ENCODE measurements at regions of chr16 and their contacts with region 1.

Region 1: DNA sequence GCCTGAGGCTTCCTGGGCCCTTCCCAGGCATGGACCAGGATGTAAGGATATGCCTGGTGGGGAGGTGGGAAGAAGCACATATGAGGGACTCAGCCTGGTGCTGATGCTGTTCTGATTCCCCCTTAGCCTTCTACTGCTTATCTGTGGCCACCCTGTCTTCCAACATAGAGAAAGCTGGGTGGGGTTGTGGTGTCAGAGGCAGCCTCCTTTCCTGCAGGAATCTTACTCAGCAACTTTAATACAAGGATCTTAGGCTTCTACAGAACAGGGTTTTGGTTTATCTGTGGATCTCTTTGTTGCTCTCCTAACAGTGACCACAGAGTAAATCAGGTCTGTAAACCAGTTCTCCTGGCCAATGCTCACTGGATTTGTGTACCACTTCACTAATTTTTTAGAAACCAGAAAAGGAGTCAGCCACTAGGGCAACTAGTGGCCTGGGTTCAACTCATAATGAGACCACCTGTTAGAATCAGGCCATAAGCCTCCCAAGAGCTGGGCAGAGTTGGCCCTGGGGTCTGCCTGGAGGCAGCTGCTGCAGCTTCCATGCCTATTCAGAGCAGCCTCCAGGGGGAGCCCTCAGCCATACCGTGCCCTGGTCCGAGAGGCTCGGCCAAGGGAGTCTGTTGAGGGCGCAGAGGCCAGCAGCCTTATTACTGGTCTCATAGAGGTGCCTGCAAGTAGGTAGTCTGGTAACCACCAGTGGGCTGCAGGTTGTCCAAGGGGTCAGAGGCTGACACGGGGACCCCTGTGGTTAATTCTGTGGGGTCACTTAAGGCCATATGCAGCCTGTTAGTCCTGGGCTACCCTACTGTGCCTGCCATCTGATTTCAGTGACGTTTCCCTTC is 7.1 kb downstream of the HAS3 start:
- DNase-seq: peak in 2 of 3 donors; percentile 73 to 75
- ATAC-seq: peak; percentile 84
- H3K4me3 ChIP-seq: no peak overlapping the region
- H3K4me1 ChIP-seq: peaks cover 4% of the 10 kb centered on the region
- CTCF ChIP-seq: peak; percentile 66

Region 2: DNA sequence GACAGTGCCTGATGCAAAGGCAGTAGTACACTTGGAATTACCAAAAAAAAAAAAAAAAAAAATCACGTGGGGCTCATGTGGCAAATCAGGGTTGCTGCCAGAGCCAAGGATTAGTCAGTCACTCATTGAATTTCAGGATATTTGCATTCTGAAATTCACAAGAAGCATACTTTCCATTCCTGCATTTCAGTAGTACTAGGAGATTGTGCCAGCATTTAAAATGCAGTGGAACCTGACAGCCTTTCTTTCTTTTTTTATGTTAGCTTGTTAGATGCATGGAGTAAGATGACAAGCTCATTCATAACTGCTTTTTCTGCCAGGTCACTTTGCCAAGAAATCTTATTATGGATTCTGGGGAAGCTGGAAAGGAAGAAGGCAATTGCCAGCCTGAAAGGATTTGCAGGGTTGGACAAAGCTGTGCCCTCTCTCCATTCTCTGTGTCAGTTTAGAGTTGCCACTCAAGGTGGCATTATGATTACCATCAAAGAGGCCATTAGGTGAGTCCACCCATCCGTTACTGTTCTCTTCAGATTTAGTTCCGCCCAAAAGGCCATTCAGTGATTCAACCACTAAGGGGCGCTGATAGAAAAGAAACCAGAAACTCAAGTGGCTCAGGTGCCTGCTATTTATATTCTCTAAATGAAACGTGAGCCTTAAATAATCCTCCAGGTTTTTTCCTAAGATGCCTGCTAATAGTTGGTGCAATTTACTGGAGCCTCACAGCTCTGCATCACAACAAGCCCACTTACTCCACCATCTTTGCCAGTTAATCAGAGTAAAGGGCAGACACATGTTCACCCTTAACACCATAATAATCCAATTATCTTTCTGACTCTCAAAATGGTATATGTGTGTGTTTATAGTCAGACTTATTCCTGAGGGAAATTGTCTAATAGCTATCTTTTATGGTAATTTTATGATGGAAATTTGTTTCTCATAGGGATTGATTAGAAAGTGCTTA is 210.2 kb before region 1 on chr16:
- intact Hi-C with region 1: loop called in 1 of 2 experiments (anchors 10 kb)
- DNase-seq: peak in 1 of 3 donors; percentile 79
- ATAC-seq: peak; percentile 90
- H3K4me3 ChIP-seq: no peak overlapping the region
- H3K4me1 ChIP-seq: peaks cover under 1% of the 10 kb centered on the region
- CTCF ChIP-seq: peak; percentile 46

Region 3: DNA sequence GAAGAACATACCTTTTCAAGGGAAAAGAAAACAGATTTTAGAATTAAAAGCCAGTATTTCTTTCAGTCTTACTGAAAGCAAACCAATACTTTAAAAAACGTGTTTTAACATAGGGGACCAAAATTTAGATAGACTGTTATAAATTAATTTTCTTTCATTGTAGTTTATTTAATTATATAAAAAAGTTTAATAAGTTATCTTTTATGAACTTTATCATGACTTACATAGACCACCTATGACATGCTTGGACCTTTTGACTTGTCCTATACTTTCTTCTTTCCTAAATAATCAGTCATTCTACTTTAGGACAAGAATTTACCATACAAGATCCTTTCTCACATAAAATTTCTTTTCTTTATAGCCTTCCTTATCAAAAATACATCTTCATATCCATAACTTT is 109.0 kb before region 1 on chr16:
- intact Hi-C with region 1: no loop called
- DNase-seq: no peak
- ATAC-seq: no peak
- H3K4me3 ChIP-seq: no peak overlapping the region
- H3K4me1 ChIP-seq: no peaks in the 10 kb centered on the region
- CTCF ChIP-seq: no peak